PC-9 (cell line): ENCODE measurements at regions of chr2 and their contacts with region 1.

Region 1: DNA sequence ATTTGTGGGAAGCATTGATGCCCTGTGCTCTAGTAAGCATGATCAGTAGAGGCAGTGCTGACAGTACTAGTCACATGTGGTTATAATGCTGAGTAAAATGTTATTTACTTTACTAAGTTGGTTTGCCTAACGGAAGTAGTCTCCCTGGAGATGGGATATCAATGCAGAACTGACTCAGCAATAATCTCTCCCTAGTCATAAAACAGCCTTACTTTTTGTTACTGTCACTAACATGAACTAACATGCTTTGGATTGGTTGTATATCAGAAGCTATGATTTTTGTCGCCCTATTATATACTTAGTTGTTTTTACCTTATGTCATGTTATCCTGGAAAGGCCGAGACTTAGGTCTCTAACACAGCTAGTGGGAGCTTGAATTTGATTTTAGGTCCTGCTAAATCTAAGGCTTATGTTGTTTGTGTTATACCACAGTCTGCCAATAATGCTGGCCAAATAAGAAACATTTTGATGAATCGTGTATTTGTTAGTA is 166.5 kb downstream of the MCFD2 start:
- DNase-seq: peak in 1 of 2 experiments; percentile 63
- H3K4me3 ChIP-seq: no peak overlapping the region
- H3K27ac ChIP-seq: no peak overlapping the region
- H3K4me1 ChIP-seq: peaks cover 22% of the 10 kb centered on the region
- H3K27me3 ChIP-seq: no peaks in the 10 kb centered on the region
- CTCF ChIP-seq: no peak

Region 2: DNA sequence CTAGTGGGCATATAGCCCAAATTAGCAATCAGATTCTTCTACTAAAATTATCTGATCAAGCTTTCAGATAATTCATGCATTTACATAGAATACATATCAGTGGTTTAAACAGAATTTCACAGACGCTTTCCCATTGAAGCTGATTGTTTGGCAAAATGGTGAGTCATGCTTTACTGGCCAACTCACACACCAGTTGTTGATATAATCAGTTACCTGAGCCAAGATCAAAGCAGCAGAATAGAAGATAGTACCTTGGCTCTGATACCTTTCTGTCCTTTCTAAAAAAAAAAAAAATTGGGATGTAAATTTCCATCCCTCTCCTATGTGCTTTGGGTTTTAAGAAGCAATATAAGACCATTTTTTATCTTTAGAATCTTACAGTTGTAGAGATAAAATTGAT is 11.5 kb before region 1 on chr2:
- CTCF ChIA-PET with region 1: interaction called, 11 read pairs
- POLR2A ChIA-PET with region 1: no interaction called
- intact Hi-C with region 1: no loop called
- DNase-seq: peak; percentile 20 to 85
- H3K4me3 ChIP-seq: no peak overlapping the region
- H3K27ac ChIP-seq: peak overlapping the region; percentile 29
- H3K4me1 ChIP-seq: peaks cover 17% of the 10 kb centered on the region
- H3K27me3 ChIP-seq: no peaks in the 10 kb centered on the region
- CTCF ChIP-seq: no peak

Region 3: DNA sequence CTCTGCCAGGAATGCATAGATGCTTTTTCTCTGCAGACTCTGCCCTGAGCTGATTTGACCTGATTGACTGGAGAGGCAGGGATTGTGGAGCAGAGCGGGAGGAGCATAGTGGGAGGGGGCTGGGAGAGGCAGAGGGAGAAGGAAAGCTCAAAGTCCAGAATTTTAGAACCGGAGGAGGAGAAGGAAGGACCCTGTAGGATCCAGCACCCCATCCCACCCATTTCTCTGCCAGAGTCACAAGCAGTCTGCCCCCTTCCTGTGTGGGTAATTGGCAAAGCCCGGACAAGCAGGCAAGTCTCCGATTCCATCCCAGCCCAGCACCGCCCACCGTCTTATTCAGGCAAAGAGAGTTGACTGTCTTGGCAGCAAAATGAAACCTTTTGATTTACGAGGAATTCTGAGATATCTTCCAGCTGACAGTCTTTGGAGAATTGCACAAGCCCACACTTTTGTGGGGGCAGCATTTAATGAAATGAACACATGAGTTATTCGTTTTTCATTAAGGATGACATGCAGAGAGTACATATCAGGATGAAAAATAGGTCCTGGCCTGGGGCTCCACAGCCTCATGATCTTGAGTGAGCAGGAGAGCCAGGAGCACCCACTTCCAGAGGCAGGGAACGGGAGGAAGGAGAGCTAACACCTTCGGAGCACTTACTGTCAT is 63.4 kb after region 1 on chr2:
- CTCF ChIA-PET with region 1: no interaction called
- POLR2A ChIA-PET with region 1: no interaction called
- intact Hi-C with region 1: no loop called
- DNase-seq: no peak
- H3K4me3 ChIP-seq: no peak overlapping the region
- H3K27ac ChIP-seq: no peak overlapping the region
- H3K4me1 ChIP-seq: no peaks in the 10 kb centered on the region
- H3K27me3 ChIP-seq: no peaks in the 10 kb centered on the region
- CTCF ChIP-seq: no peak

Region 4: GRCh38 chr2:46857893-46858701 is 109.0 kb after region 1 on chr2:
- CTCF ChIA-PET with region 1: no interaction called
- POLR2A ChIA-PET with region 1: no interaction called
- intact Hi-C with region 1: no loop called
- DNase-seq: peak; percentile 41 to 62
- H3K4me3 ChIP-seq: no peak overlapping the region
- H3K27ac ChIP-seq: peak overlapping the region; percentile 91
- H3K4me1 ChIP-seq: peaks cover 59% of the 10 kb centered on the region
- H3K27me3 ChIP-seq: no peaks in the 10 kb centered on the region
- CTCF ChIP-seq: no peak

Region 5: DNA sequence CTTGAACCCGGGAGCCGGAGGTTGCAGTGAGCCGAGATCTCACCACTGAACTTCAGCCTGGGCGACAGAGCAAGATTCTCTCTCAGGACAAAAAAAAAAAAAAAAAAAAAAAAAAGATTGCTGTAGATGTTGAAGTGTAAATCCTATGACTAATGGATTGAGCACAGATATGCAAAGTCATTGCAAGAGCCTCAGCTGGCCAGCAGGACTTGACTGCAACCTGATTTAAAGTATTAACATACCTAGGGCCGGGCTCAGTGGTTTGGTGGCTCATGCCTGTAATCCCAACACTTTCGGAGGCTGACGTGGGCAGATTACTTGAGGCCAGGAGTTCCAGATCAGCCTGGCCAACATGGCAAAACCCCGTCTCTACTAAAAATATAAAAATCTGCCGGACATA is 550.5 kb after region 1 on chr2:
- CTCF ChIA-PET with region 1: interaction called, 19 read pairs
- POLR2A ChIA-PET with region 1: no interaction called
- intact Hi-C with region 1: no loop called
- DNase-seq: peak; percentile 59 to 89
- H3K4me3 ChIP-seq: no peak overlapping the region
- H3K27ac ChIP-seq: peak overlapping the region; percentile 48; the same call in 1 of the 2 replicates
- H3K4me1 ChIP-seq: peaks cover 33% of the 10 kb centered on the region
- H3K27me3 ChIP-seq: no peaks in the 10 kb centered on the region
- CTCF ChIP-seq: no peak